H1 (cell line): ENCODE measurements at regions of chr17 and their contacts with region 1.

Region 1: GRCh38 chr17:3907483-3908216 is 8.6 kb downstream of the P2RX1 start:
- DNase-seq: no peak
- H3K4me3 ChIP-seq: no peak overlapping the region
- H3K27ac ChIP-seq: no peak overlapping the region
- H3K4me1 ChIP-seq: peaks cover 0 to 31% (median 25%) of the 10 kb centered on the region in 4 experiments; a peak in 6 of 7 replicates
- H3K27me3 ChIP-seq: no peaks in the 10 kb centered on the region
- CTCF ChIP-seq: peak; percentile 69 to 75 (median 73)
- EP300 ChIP-seq: no peak
- POLR2A ChIP-seq: no peak
- RAD21 ChIP-seq: peak; percentile 88 to 92

Region 2: DNA sequence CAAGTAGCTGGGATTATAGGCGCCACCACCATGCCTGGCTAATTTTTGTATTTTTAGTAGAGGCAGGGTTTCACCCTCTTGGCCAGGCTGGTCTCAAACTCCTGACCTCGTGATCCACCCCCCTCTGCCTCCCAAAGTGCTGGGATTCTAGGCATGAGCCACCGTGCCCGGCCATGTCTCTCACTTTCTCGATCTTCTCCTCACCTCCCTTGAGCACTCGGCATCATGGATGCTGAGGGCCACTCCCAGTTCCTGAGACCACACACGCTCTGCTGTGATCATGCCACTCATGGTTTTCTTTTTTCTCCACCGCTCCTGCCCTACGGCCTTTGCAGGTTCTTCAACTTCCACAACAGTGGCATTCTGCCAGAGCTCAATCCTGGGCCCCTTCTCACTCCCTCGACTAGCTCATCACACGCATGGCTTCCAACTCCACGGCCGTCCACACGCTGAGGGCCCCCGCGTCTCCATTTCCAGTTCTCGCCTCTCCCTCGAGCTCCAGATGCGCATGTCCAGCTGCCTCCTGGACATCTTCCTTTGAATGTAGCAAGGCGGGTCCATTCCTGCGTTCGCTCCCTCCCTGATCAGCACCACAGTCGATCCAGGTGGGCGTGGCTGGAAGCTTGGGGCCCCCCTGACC is 56.1 kb before region 1 on chr17:
- CTCF ChIA-PET with region 1: interaction called, 131 read pairs
- POLR2A ChIA-PET with region 1: interaction called, 6 read pairs
- DNase-seq: no peak
- H3K4me3 ChIP-seq: no peak overlapping the region
- H3K27ac ChIP-seq: no peak overlapping the region
- H3K4me1 ChIP-seq: 0 out of 7 replicates have a peak, but pooled peaks cover 0 to under 1% (median 0%) of the 10 kb centered on the region in 4 experiments
- H3K27me3 ChIP-seq: no peaks in the 10 kb centered on the region; a peak in 1 of 7 replicates
- CTCF ChIP-seq: no peak
- EP300 ChIP-seq: no peak
- POLR2A ChIP-seq: no peak
- RAD21 ChIP-seq: no peak

Region 3: DNA sequence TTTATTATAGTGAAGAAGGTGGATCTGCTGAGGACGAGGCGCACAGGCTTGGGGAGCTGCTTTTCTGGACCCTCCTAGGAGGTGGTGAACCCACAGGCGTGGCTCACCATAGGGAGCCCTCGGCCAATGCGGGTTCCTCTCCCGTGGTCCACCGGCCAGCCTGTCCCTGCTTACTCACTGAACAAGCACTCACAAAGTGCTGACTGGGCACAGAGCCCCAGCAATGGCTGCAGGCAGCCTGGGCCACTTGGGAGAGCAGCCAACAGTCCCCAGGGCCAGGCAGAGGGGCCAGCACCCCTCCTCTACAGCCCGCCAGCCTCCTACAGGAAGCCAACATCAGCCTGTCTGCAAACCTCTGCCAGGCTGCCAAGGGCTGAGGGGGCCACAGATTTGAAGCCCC is 42.5 kb before region 1 on chr17:
- CTCF ChIA-PET with region 1: interaction called, 131 read pairs
- POLR2A ChIA-PET with region 1: interaction called, 4 read pairs
- DNase-seq: no peak
- H3K4me3 ChIP-seq: no peak overlapping the region
- H3K27ac ChIP-seq: no peak overlapping the region
- H3K4me1 ChIP-seq: no peaks in the 10 kb centered on the region
- H3K27me3 ChIP-seq: no peaks in the 10 kb centered on the region
- CTCF ChIP-seq: no peak
- EP300 ChIP-seq: no peak
- POLR2A ChIP-seq: no peak
- RAD21 ChIP-seq: no peak

Region 4: DNA sequence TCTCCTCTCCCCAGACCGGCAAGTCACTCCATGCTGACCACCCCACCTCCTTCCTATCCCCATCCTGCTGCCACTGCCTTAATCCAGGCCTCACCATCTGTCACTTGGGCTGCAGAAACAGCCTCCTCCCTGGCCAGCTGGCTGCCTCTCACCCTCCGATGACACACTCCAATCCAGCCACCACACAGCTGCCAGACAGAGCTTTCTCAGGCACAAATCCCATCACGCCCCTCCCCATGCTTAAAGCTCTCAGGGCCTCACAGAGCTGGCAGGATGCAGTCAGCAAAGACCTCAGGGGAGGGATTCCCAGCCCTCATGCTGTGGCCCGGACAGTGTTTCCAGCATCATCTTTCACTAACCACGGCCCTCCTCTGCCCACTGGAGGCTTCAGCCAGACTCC is 28.5 kb before region 1 on chr17:
- CTCF ChIA-PET with region 1: interaction called, 20 read pairs
- POLR2A ChIA-PET with region 1: interaction called, 4 read pairs
- DNase-seq: no peak
- H3K4me3 ChIP-seq: no peak overlapping the region
- H3K27ac ChIP-seq: no peak overlapping the region
- H3K4me1 ChIP-seq: no peaks in the 10 kb centered on the region
- H3K27me3 ChIP-seq: no peaks in the 10 kb centered on the region
- CTCF ChIP-seq: no peak
- EP300 ChIP-seq: no peak
- POLR2A ChIP-seq: no peak
- RAD21 ChIP-seq: no peak

Region 5: GRCh38 chr17:3893003-3893719 is 14.5 kb before region 1 on chr17 and contains the start of gene CAMKK1:
- CTCF ChIA-PET with region 1: interaction called, 17 read pairs
- POLR2A ChIA-PET with region 1: interaction called, 22 read pairs
- DNase-seq: peak; percentile 44 to 92
- H3K4me3 ChIP-seq: peak within 1 kb of the TSS; percentile 52 to 82 (median 63)
- H3K27ac ChIP-seq: no peak within 1 kb of the TSS; the same call in 1 of the 2 replicates
- H3K4me1 ChIP-seq: peaks cover 6 to 31% (median 21%) of the 10 kb centered on the region in 4 experiments
- H3K27me3 ChIP-seq: peaks cover 0 to 6% (median 1%) of the 10 kb centered on the region in 4 experiments; a peak in 3 of 7 replicates
- CTCF ChIP-seq: no peak
- EP300 ChIP-seq: no peak
- POLR2A ChIP-seq: peak in 1 of 2 experiments; percentile 67; a peak in 2 of 3 replicates
- RAD21 ChIP-seq: no peak
- total RNA-seq, gene CAMKK1: 7.6 and 8.5 TPM in 2 replicates